Endothelial cell of umbilical vein (primary cell): ENCODE measurements at regions of chr12 and their contacts with region 1.

Region 1: GRCh38 chr12:78470354-78471195 is 394.0 kb upstream of the SYT1 start:
- DNase-seq: peak; percentile 57
- H3K4me3 ChIP-seq: no peak overlapping the region
- H3K27ac ChIP-seq: no peak overlapping the region
- H3K4me1 ChIP-seq: no peaks in the 10 kb centered on the region
- H3K27me3 ChIP-seq: peaks cover 0 to 10% of the 10 kb centered on the region in 2 experiments
- CTCF ChIP-seq: peak; percentile 47 to 72
- POLR2A ChIP-seq: no peak

Region 2: GRCh38 chr12:78457938-78458337 is 12.6 kb before region 1 on chr12:
- CTCF ChIA-PET with region 1: interaction called, 10 read pairs
- POLR2A ChIA-PET with region 1: no interaction called
- dilution Hi-C with region 1: no loop called
- intact Hi-C with region 1: no loop called
- DNase-seq: no peak
- H3K4me3 ChIP-seq: no peak overlapping the region
- H3K27ac ChIP-seq: no peak overlapping the region
- H3K4me1 ChIP-seq: no peaks in the 10 kb centered on the region
- H3K27me3 ChIP-seq: no peaks in the 10 kb centered on the region
- CTCF ChIP-seq: no peak
- POLR2A ChIP-seq: no peak

Region 3: DNA sequence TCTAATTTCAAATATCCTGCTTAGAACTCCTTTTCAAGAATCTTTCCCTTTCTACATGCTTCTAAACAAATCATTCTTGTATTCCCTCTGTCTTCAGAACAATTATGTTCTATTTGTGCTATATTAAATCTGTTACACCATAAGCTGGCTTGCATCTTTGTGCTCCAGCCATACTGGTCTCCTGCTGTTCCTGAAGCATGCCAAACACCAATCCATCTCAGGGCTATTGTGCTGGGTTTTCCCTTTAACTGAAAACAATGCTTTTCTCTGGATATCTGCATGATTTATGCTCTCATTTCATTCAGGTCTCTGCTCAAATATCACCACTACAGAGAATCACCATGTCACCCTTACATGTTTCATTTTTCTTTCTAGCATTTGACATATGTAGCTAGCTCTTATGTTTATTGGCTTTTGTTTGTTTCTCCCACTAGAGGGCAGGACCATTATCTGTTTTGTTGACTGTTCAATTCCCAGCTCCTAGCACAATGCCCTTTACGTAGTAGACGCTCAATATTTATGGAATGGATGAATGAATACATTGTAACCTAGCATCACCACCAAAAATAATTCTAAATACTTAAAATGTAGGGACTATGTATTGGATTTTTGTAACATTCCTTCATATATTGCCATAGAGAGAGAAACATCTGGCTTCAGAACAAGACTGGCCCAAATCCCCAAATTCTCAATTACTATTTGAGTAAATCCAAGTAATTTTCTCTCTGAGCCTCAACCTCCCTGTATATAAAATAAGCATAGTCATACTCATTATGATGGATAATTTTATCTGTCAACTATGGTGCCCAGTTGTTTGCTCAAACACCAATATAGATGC is 92.0 kb after region 1 on chr12:
- CTCF ChIA-PET with region 1: interaction called, 10 read pairs
- POLR2A ChIA-PET with region 1: no interaction called
- dilution Hi-C with region 1: no loop called
- intact Hi-C with region 1: no loop called
- DNase-seq: peak; percentile 46
- H3K4me3 ChIP-seq: no peak overlapping the region
- H3K27ac ChIP-seq: no peak overlapping the region
- H3K4me1 ChIP-seq: no peaks in the 10 kb centered on the region
- H3K27me3 ChIP-seq: peaks cover 5% of the 10 kb centered on the region in 2 experiments
- CTCF ChIP-seq: peak in 1 of 2 donors; percentile 32
- POLR2A ChIP-seq: no peak

Region 4: DNA sequence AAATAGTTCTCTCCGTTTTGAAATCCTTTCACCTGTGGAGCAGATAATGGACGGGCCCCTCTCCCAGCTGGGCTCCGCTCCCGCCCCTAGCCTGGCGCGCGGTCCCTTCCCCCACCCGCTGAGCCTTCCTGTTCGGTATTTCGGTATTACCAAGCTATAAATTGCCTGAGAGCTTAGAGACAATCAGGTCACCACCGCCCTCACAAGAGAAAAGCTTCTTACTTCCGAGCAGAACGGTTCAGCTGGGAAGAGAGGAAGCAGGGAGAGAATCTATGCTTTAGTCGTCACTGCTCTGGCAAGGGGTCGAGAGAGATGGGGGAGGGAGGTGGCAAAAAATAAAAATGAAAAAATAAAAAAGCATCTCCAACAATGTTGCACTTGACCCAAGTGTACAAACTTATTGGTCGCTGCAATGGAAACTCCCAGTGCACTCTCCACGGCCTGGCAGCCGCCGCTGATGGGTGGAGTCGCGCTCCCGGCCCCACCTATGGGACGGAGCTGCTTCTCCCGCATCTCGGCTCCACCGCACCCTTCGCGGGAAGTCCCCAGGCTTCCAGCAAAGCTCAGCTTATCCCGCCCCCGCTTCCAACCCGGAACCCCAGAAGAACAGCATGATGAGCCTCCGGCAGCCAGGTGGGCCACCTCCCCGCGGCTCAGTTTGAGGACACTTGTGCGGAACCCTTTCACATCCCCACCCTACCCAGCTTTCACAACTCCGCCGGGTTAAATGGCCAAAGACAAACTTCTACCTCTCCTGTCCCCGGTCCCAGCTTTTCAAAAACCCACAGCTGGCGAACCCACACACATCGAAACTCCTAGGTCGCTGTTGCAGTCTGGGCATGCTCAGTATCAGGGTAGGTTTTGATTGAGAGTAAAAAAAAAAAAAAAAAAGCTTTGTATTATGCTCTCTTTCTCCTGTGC is 393.2 kb after region 1 on chr12:
- CTCF ChIA-PET with region 1: interaction called, 7 read pairs
- POLR2A ChIA-PET with region 1: interaction called, 4 read pairs
- dilution Hi-C with region 1: no loop called
- intact Hi-C with region 1: loop called (anchors 10 kb)
- DNase-seq: peak; percentile 66
- H3K4me3 ChIP-seq: peak overlapping the region; percentile 45 to 91 (median 88)
- H3K27ac ChIP-seq: peak overlapping the region; percentile 69
- H3K4me1 ChIP-seq: peaks cover 9% of the 10 kb centered on the region
- H3K27me3 ChIP-seq: peaks cover 6 to 9% of the 10 kb centered on the region in 2 experiments
- CTCF ChIP-seq: no peak
- POLR2A ChIP-seq: no peak

Region 5: GRCh38 chr12:79006306-79006705 is 535.7 kb after region 1 on chr12:
- CTCF ChIA-PET with region 1: interaction called, 12 read pairs
- POLR2A ChIA-PET with region 1: no interaction called
- dilution Hi-C with region 1: no loop called
- intact Hi-C with region 1: loop called (anchors 2 kb)
- DNase-seq: no peak
- H3K4me3 ChIP-seq: no peak overlapping the region
- H3K27ac ChIP-seq: no peak overlapping the region
- H3K4me1 ChIP-seq: no peaks in the 10 kb centered on the region
- H3K27me3 ChIP-seq: no peaks in the 10 kb centered on the region
- CTCF ChIP-seq: no peak
- POLR2A ChIP-seq: no peak

Region 6: GRCh38 chr12:79344855-79345847 is 874.6 kb after region 1 on chr12:
- CTCF ChIA-PET with region 1: interaction called, 27 read pairs
- POLR2A ChIA-PET with region 1: no interaction called
- dilution Hi-C with region 1: no loop called
- intact Hi-C with region 1: loop called (anchors 1 kb)
- DNase-seq: peak; percentile 54
- H3K4me3 ChIP-seq: no peak overlapping the region
- H3K27ac ChIP-seq: no peak overlapping the region
- H3K4me1 ChIP-seq: no peaks in the 10 kb centered on the region
- H3K27me3 ChIP-seq: peaks cover 0 to 2% of the 10 kb centered on the region in 2 experiments
- CTCF ChIP-seq: peak; percentile 35 to 51
- POLR2A ChIP-seq: no peak